Spleen (tissue), 13 donors: ENCODE measurements at regions of chr18 and their contacts with region 1.

Region 1: DNA sequence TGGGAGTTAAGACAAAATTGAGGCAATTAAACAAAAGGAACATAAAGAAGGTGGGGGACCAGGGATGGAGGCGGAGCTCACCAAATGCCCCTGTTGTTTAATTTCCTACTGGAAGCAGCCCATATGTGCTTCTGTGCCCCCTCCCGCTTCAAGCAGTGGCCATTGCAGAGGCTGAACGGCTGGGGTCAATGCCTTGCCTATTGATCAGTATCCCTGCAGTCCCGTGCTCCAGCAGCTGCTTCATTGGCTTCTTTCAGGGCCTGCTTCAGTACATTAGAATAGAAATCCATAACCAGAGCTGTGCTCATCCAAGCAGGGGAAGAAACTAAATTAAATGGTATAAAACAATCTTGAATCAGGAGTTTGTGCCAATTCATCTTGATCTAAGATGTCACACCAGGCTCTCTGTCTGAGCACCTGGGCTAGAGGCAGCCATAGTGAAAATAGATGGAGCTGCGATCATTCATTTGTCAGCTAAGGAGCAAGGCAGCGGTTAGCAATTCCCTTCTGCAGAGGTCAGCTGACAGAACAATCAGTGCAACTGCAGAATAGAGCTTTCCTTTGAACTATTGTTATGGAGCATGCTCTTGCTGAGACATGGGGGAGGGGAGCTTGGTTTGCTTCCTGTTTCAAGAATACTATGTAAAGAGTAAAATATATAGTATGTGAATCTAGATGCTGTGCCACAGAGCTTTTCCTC is 222.4 kb downstream of the WDR7 start:
- DNase-seq: no peak
- H3K4me3 ChIP-seq: no peak overlapping the region
- H3K27ac ChIP-seq: no peak overlapping the region
- H3K4me1 ChIP-seq: peaks cover 0 to 5% (median 0%) of the 10 kb centered on the region in 6 donors
- H3K27me3 ChIP-seq: no peaks in the 10 kb centered on the region
- CTCF ChIP-seq: no peak
- POLR2A ChIP-seq: no peak

Region 2: GRCh38 chr18:56314396-56314795 is 559.2 kb before region 1 on chr18:
- intact Hi-C with region 1: no loop called
- DNase-seq: no peak
- H3K4me3 ChIP-seq: no peak overlapping the region
- H3K27ac ChIP-seq: no peak overlapping the region
- H3K4me1 ChIP-seq: peaks cover 0 to 16% (median 0%) of the 10 kb centered on the region in 6 donors
- H3K27me3 ChIP-seq: no peaks in the 10 kb centered on the region
- CTCF ChIP-seq: peak in 1 of 11 experiments; percentile 8
- POLR2A ChIP-seq: no peak

Region 3: GRCh38 chr18:57446322-57446721 is 572.7 kb after region 1 on chr18:
- intact Hi-C with region 1: loop called (anchors 10 kb)
- DNase-seq: no peak
- H3K4me3 ChIP-seq: no peak overlapping the region
- H3K27ac ChIP-seq: no peak overlapping the region
- H3K4me1 ChIP-seq: peaks cover 3 to 7% (median 5%) of the 10 kb centered on the region in 6 donors
- H3K27me3 ChIP-seq: peaks cover 3 to 96% (median 57%) of the 10 kb centered on the region in 7 donors
- CTCF ChIP-seq: peak in 8 of 11 experiments; percentile 6 to 43 (median 32)
- POLR2A ChIP-seq: no peak

Region 4: GRCh38 chr18:57561728-57562423 is 688.3 kb after region 1 on chr18:
- intact Hi-C with region 1: loop called (anchors 10 kb)
- DNase-seq: no peak
- H3K4me3 ChIP-seq: no peak overlapping the region
- H3K27ac ChIP-seq: no peak overlapping the region
- H3K4me1 ChIP-seq: peaks cover 0 to 4% (median 0%) of the 10 kb centered on the region in 6 donors
- H3K27me3 ChIP-seq: no peaks in the 10 kb centered on the region
- CTCF ChIP-seq: peak; percentile 38 to 82 (median 69)
- POLR2A ChIP-seq: no peak